ENCODE measurements at regions of chrX and their contacts with region 1.

Region 1: GRCh38 chrX:103845165-103845653 is 13.2 kb upstream of the RAB9B start:
- DNase-seq: peak; percentile 86
- H3K4me3 ChIP-seq: no peak overlapping the region
- H3K27ac ChIP-seq: peak overlapping the region; percentile 94
- H3K4me1 ChIP-seq: peaks cover 20% of the 10 kb centered on the region
- H3K27me3 ChIP-seq: no peaks in the 10 kb centered on the region
- CTCF ChIP-seq: peak; percentile 65 to 80

Region 2: DNA sequence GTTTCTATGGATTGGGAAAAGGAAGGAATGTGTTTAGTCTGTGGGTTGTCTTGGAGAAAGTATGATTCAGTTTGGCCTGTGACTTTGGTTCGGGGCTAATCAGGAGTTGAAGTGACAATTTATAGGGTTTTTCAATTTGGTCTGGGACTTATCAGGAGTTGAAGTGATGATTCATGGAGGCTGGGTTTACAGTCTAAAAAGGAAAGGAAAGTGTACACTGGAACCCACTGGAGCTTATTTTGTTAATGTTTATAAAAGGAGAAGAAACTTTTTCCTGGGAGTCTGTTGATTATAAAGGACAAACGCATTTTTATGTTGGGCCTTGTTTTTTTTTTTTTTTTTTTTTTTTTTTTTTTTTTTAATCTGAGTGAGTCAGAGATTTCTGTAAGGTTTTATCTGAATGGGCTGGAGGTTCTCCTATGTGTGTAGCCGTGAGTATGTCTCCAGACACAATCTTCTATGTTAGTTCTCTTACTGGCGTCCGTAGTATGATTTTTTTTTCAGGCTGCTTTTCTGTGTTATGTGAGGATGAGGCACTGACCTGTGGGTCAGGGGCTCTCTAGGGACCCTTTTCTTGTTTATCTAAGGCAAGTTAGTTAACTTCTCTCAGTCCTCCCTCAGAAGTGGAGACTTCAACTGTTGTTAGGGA is 19.8 kb after region 1 on chrX:
- CTCF ChIA-PET with region 1: no interaction called
- dilution Hi-C with region 1: no loop called
- in situ Hi-C with region 1: no loop called
- intact Hi-C with region 1: no loop called
- DNase-seq: no peak
- H3K4me3 ChIP-seq: no peak overlapping the region
- H3K27ac ChIP-seq: no peak overlapping the region
- H3K4me1 ChIP-seq: peaks cover 18% of the 10 kb centered on the region
- H3K27me3 ChIP-seq: no peaks in the 10 kb centered on the region
- CTCF ChIP-seq: no peak

Region 3: GRCh38 chrX:103878466-103879122 is 33.4 kb after region 1 on chrX:
- CTCF ChIA-PET with region 1: no interaction called
- dilution Hi-C with region 1: no loop called
- in situ Hi-C with region 1: no loop called
- intact Hi-C with region 1: loop called (anchors 2 kb)
- DNase-seq: peak; percentile 77
- H3K4me3 ChIP-seq: no peak overlapping the region
- H3K27ac ChIP-seq: no peak overlapping the region
- H3K4me1 ChIP-seq: peaks cover 12% of the 10 kb centered on the region
- H3K27me3 ChIP-seq: no peaks in the 10 kb centered on the region
- CTCF ChIP-seq: no peak

Region 4: DNA sequence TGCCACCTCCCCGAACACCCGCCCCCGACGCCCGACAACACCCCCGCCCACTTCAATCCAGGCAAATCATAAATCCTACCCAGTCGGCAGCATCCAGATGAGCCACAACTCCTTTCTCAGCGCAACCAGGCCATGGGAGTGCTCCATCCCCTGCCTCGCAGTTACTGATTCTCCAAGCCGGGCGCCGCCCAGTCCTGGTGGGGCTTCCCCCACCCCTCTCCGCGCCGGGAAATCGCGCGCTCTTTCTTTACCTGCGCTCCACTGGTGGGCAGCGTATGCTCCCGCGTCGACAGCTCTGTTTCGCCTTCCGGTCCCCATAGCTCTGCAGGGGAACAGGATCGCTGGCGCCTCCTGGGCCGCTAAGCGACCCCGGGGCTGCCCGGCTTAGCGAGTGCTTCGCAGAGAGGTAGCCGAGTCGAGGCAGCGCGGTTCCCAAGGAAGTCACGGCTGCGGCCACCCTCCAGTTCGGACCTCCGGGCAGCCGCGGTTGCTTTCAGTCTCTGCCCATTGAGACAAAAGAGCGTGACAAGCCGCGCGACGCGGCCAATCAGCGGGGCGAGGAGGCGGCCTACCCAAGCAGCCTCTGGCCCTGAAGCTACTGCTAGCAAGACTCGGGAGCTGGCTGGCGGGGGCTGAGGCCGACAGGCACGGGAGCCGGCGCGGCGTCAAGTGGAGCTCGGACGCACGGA is 73.5 kb after region 1 on chrX:
- CTCF ChIA-PET with region 1: interaction called, 3 read pairs
- dilution Hi-C with region 1: no loop called
- in situ Hi-C with region 1: no loop called
- intact Hi-C with region 1: loop called (anchors 1 kb)
- DNase-seq: peak; percentile 66
- H3K4me3 ChIP-seq: peak overlapping the region; percentile 65 to 69 (median 66)
- H3K27ac ChIP-seq: peak overlapping the region; percentile 54
- H3K4me1 ChIP-seq: peaks cover 3% of the 10 kb centered on the region
- H3K27me3 ChIP-seq: no peaks in the 10 kb centered on the region
- CTCF ChIP-seq: no peak

Region 5: GRCh38 chrX:103941201-103941975 is 96.2 kb after region 1 on chrX:
- CTCF ChIA-PET with region 1: no interaction called
- dilution Hi-C with region 1: no loop called
- in situ Hi-C with region 1: loop called (anchors 25 kb)
- intact Hi-C with region 1: loop called (anchors 1 kb)
- DNase-seq: peak; percentile 35
- H3K4me3 ChIP-seq: no peak overlapping the region
- H3K27ac ChIP-seq: no peak overlapping the region
- H3K4me1 ChIP-seq: no peaks in the 10 kb centered on the region
- H3K27me3 ChIP-seq: no peaks in the 10 kb centered on the region
- CTCF ChIP-seq: peak; percentile 40 to 63

Region 6: GRCh38 chrX:104113222-104113965 is 268.2 kb after region 1 on chrX:
- CTCF ChIA-PET with region 1: no interaction called
- dilution Hi-C with region 1: no loop called
- in situ Hi-C with region 1: no loop called
- intact Hi-C with region 1: loop called (anchors 1 kb)
- DNase-seq: peak; percentile 53
- H3K4me3 ChIP-seq: peak overlapping the region; percentile 30 to 67 (median 63)
- H3K27ac ChIP-seq: no peak overlapping the region
- H3K4me1 ChIP-seq: no peaks in the 10 kb centered on the region
- H3K27me3 ChIP-seq: no peaks in the 10 kb centered on the region
- CTCF ChIP-seq: peak; percentile 42 to 61

Region 7: DNA sequence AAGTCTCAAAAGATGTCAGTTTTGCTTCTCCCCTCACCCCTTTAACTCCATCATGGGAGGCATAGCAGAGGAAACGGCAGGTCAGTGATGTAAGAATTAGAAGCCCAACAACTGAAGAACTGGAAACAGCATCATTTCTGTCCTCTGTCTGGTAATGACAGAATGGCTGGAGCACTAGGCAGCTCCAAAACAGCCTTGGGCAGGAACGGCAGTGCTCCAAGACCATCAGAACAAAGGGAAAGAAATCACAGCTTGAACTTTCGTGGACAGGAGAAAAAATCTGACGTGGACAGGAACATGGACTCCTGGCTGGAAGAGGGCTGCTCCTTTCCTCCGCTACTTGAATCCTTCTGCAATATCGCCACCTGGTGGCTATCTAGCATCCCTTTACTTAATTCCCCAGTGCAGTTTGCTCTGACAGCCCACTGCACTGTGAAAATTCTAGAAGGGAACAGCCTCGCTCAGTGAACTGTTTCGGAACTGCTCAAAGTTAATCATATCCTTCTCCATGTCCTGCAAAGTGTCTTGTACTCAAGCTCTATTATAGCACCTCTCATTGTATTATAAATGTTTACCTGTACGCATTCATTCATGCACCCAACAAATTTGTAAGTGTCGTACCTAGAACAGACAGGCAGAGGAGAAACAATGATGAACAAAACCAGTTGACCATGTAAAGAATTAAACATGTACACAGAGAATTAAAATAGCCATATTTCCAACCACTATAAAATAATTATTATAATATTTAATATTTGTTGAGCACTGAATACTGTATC is 291.2 kb after region 1 on chrX:
- CTCF ChIA-PET with region 1: interaction called, 6 read pairs
- dilution Hi-C with region 1: no loop called
- in situ Hi-C with region 1: loop called (anchors 10 to 25 kb)
- intact Hi-C with region 1: loop called (anchors 1 kb)
- DNase-seq: peak; percentile 65
- H3K4me3 ChIP-seq: peak overlapping the region in 2 of 3 experiments; percentile 37 to 40
- H3K27ac ChIP-seq: no peak overlapping the region
- H3K4me1 ChIP-seq: no peaks in the 10 kb centered on the region
- H3K27me3 ChIP-seq: no peaks in the 10 kb centered on the region
- CTCF ChIP-seq: peak; percentile 79

Region 8: DNA sequence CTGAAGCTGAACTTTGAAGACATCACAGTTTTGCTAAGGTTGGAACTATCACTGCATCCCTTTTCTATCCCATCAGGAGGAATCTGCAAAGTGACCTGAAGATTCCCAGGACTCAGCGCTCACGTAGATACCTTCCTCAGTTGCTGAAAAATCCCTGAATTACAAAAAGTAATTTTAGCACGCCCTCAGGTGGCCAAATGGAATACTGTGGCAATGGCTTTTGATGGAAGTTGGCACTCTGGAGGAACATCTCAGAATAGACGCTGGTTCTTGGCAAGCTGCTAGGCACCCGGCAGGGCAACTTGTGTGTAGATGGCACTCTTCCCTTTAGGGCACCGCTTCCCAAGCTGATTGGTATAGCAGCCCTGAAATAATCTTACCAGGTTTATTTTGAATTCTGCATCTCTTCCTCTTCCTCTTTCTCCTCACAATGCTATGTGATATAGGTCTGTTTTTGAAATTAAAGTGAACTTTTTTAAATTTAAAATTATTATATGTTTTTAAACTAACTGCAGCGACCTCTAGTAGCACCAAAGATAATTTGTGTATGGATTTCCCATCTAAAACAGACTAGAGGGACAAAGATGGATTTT is 425.8 kb after region 1 on chrX:
- CTCF ChIA-PET with region 1: no interaction called
- dilution Hi-C with region 1: no loop called
- in situ Hi-C with region 1: no loop called
- intact Hi-C with region 1: loop called (anchors 1 kb)
- DNase-seq: peak; percentile 53
- H3K4me3 ChIP-seq: peak overlapping the region in 1 of 3 experiments; percentile 18
- H3K27ac ChIP-seq: no peak overlapping the region
- H3K4me1 ChIP-seq: no peaks in the 10 kb centered on the region
- H3K27me3 ChIP-seq: peaks cover 9% of the 10 kb centered on the region
- CTCF ChIP-seq: peak; percentile 77 to 87

Measured in mammary epithelial cell (primary cell).